Transverse colon (tissue), 4 donors: ENCODE measurements at regions of chr7 and their contacts with region 1.

Region 1: GRCh38 chr7:91249506-91250240 is 14.6 kb upstream of the FZD1 start:
- DNase-seq: no peak
- H3K4me3 ChIP-seq: no peak overlapping the region
- H3K27ac ChIP-seq: no peak overlapping the region
- H3K4me1 ChIP-seq: no peaks in the 10 kb centered on the region
- H3K27me3 ChIP-seq: no peaks in the 10 kb centered on the region
- CTCF ChIP-seq: no peak
- EP300 ChIP-seq: no peak
- POLR2A ChIP-seq: no peak

Region 2: GRCh38 chr7:89757910-89758309 is 1491.8 kb before region 1 on chr7:
- in situ Hi-C with region 1: no loop called
- intact Hi-C with region 1: loop called (anchors 10 kb)
- DNase-seq: no peak
- H3K4me3 ChIP-seq: no peak overlapping the region
- H3K27ac ChIP-seq: no peak overlapping the region
- H3K4me1 ChIP-seq: no peaks in the 10 kb centered on the region
- H3K27me3 ChIP-seq: no peaks in the 10 kb centered on the region
- CTCF ChIP-seq: no peak
- EP300 ChIP-seq: no peak
- POLR2A ChIP-seq: no peak

Region 3: GRCh38 chr7:90766814-90767564 is 482.7 kb before region 1 on chr7:
- in situ Hi-C with region 1: no loop called
- intact Hi-C with region 1: no loop called
- DNase-seq: peak; percentile 47
- H3K4me3 ChIP-seq: no peak overlapping the region
- H3K27ac ChIP-seq: peak overlapping the region in 2 of 4 donors; percentile 18 to 30
- H3K4me1 ChIP-seq: peaks cover 0 to 7% (median 0%) of the 10 kb centered on the region in 4 donors
- H3K27me3 ChIP-seq: no peaks in the 10 kb centered on the region
- CTCF ChIP-seq: no peak
- EP300 ChIP-seq: no peak
- POLR2A ChIP-seq: no peak

Region 4: GRCh38 chr7:91551377-91552175 is 301.9 kb after region 1 on chr7:
- in situ Hi-C with region 1: no loop called
- intact Hi-C with region 1: no loop called
- DNase-seq: no peak
- H3K4me3 ChIP-seq: no peak overlapping the region
- H3K27ac ChIP-seq: no peak overlapping the region
- H3K4me1 ChIP-seq: no peaks in the 10 kb centered on the region
- H3K27me3 ChIP-seq: no peaks in the 10 kb centered on the region
- CTCF ChIP-seq: no peak
- EP300 ChIP-seq: no peak
- POLR2A ChIP-seq: no peak